HEK293T (cell line): ENCODE measurements at regions of chr11 and their contacts with region 1.

Region 1: DNA sequence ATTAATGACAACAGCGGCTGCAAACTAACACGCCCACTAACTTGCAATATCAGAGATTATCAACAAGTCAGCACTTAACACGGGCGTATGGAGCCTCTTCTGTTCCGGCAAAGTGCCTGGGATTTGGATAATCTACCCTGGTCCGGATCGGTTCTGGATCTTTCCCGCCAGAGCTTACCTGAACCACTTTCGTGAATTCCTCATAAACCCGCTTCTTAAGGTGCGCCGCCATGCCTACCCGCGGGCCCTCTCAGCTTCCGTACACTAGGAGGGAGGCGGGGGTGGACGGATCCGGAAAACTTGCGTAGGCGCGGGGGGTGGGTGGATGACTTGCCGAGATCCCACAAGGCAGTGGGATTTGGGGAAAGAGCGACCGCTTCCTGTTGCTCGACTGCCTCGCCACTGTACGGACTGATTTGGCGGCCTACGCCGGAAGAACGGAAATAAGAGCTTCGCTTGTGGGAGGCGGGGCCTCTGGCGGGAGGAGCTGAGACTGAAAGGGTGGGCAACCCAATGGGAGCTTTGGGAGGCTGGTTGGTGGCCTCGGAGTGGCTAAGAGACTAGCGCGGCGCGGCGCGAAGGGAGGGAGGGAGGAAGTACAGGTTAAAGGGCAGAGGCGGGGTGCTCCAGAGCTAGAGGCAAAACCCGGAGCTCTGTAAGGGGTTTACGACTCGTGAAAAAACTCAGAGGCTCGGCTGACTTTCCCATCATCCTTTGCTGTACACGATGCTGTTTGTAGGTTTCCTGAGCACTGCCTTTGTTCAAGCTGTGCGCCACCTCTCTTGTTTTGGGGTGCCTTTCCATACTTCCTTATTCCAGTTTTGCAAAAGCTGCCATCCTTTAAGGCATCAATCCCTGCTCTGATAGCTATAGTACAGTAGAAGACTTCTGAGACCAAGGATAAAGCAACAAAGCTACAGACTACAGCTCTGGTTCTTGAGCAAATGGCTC is at the start of gene INTS4:
- DNase-seq: peak; percentile 94

Region 2: GRCh38 chr11:77820563-77821348 is 173.9 kb before region 1 on chr11 and contains the starts of genes AAMDC and RSF1:
- CTCF ChIA-PET with region 1: no interaction called
- POLR2A ChIA-PET with region 1: interaction called, 11 read pairs
- DNase-seq: peak; percentile 90

Region 3: GRCh38 chr11:78045851-78046485 is 51.3 kb after region 1 on chr11:
- CTCF ChIA-PET with region 1: interaction called, 7 read pairs
- POLR2A ChIA-PET with region 1: interaction called, 20 read pairs
- DNase-seq: peak; percentile 92